H1 (cell line): ENCODE measurements at regions of chr11 and their contacts with region 1.

Region 1: GRCh38 chr11:65497141-65498041 is 1.5 kb upstream of the MALAT1 start:
- DNase-seq: peak; percentile 97
- H3K4me3 ChIP-seq: peak overlapping the region; percentile 82 to 100 (median 95)
- H3K27ac ChIP-seq: peak overlapping the region; percentile 99
- H3K4me1 ChIP-seq: peaks cover 7 to 21% (median 12%) of the 10 kb centered on the region in 4 experiments; a peak in 6 of 7 replicates
- H3K27me3 ChIP-seq: no peaks in the 10 kb centered on the region
- CTCF ChIP-seq: no peak
- EP300 ChIP-seq: peak; percentile 47 to 98; a peak in 2 of 3 replicates
- POLR2A ChIP-seq: peak; percentile 75 to 91
- RAD21 ChIP-seq: peak; percentile 5 to 31; a peak in 3 of 4 replicates

Region 2: DNA sequence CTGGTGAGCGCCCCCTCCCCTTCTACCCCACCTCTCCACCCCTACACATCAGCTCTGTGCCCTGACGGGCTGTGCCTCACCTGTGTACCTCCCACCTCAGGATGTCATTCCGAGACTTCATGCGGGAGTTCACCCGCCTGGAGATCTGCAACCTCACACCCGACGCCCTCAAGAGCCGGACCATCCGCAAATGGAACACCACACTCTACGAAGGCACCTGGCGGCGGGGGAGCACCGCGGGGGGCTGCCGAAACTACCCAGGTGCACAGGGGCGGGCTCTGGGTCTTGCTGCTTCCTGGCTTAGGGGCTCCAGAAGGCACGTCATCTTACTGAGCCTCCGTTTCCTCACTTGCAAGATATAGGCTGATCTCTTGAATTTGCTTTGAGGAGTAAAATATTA is 308.9 kb before region 1 on chr11:
- CTCF ChIA-PET with region 1: no interaction called
- POLR2A ChIA-PET with region 1: no interaction called
- DNase-seq: no peak
- H3K4me3 ChIP-seq: no peak overlapping the region
- H3K27ac ChIP-seq: no peak overlapping the region
- H3K4me1 ChIP-seq: peaks cover 7 to 29% (median 19%) of the 10 kb centered on the region in 4 experiments
- H3K27me3 ChIP-seq: no peaks in the 10 kb centered on the region
- CTCF ChIP-seq: no peak
- EP300 ChIP-seq: no peak
- POLR2A ChIP-seq: no peak
- RAD21 ChIP-seq: no peak

Region 3: GRCh38 chr11:65329944-65330403 is 167.4 kb before region 1 on chr11:
- CTCF ChIA-PET with region 1: no interaction called
- POLR2A ChIA-PET with region 1: interaction called, 15 read pairs
- DNase-seq: peak in 1 of 2 experiments; percentile 91
- H3K4me3 ChIP-seq: no peak overlapping the region
- H3K27ac ChIP-seq: no peak overlapping the region
- H3K4me1 ChIP-seq: peaks cover 0 to 4% (median 2%) of the 10 kb centered on the region in 4 experiments; a peak in 3 of 7 replicates
- H3K27me3 ChIP-seq: no peaks in the 10 kb centered on the region; a peak in 1 of 7 replicates
- CTCF ChIP-seq: peak; percentile 29 to 79 (median 77)
- EP300 ChIP-seq: no peak
- POLR2A ChIP-seq: no peak
- RAD21 ChIP-seq: peak; percentile 49 to 60

Region 4: DNA sequence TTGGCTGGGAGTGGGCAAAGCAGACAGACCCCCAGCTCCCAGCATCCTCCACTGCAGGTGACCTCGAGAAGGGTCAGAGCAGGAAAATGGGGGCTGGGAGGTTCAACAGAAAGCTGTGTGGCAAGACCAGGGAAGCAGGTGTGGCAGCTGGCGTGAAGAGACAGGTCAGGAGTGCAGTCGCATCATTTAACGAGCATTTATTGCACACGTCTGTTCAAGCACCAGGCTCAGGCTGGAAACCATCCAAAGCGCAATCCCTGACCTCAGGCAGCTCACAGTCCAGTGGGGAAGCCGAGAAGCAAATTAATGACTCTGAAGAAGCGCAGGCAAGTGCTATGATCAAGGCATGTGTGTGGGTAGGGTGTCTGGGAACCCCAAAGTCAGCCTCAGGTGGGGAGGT is 122.4 kb before region 1 on chr11:
- CTCF ChIA-PET with region 1: interaction called, 3 read pairs
- POLR2A ChIA-PET with region 1: interaction called, 16 read pairs
- DNase-seq: no peak
- H3K4me3 ChIP-seq: no peak overlapping the region
- H3K27ac ChIP-seq: no peak overlapping the region
- H3K4me1 ChIP-seq: no peaks in the 10 kb centered on the region
- H3K27me3 ChIP-seq: no peaks in the 10 kb centered on the region
- CTCF ChIP-seq: no peak
- EP300 ChIP-seq: no peak
- POLR2A ChIP-seq: no peak
- RAD21 ChIP-seq: no peak

Region 5: GRCh38 chr11:65418711-65419459 is 78.5 kb before region 1 on chr11:
- CTCF ChIA-PET with region 1: interaction called, 75 read pairs
- POLR2A ChIA-PET with region 1: interaction called, 826 read pairs
- DNase-seq: peak; percentile 75 to 86
- H3K4me3 ChIP-seq: peak overlapping the region in 2 of 4 experiments; percentile 5 to 37; a peak in 2 of 8 replicates
- H3K27ac ChIP-seq: peak overlapping the region; percentile 87
- H3K4me1 ChIP-seq: peaks cover 21 to 66% (median 46%) of the 10 kb centered on the region in 4 experiments
- H3K27me3 ChIP-seq: no peaks in the 10 kb centered on the region; a peak in 1 of 7 replicates
- CTCF ChIP-seq: no peak
- EP300 ChIP-seq: peak; percentile 13 to 75; a peak in 2 of 3 replicates
- POLR2A ChIP-seq: no peak; a peak in 2 of 3 replicates
- RAD21 ChIP-seq: no peak; a peak in 1 of 4 replicates

Region 6: GRCh38 chr11:65454696-65455456 is 42.5 kb before region 1 on chr11:
- CTCF ChIA-PET with region 1: interaction called, 809 read pairs
- POLR2A ChIA-PET with region 1: interaction called, 1,447 read pairs
- DNase-seq: peak; percentile 69 to 92
- H3K4me3 ChIP-seq: peak overlapping the region; percentile 46 to 67 (median 54); a peak in 7 of 8 replicates
- H3K27ac ChIP-seq: no peak overlapping the region
- H3K4me1 ChIP-seq: peaks cover 2 to 11% (median 6%) of the 10 kb centered on the region in 4 experiments; a peak in 6 of 7 replicates
- H3K27me3 ChIP-seq: peaks cover 20 to 59% (median 53%) of the 10 kb centered on the region in 4 experiments
- CTCF ChIP-seq: no peak
- EP300 ChIP-seq: no peak
- POLR2A ChIP-seq: peak in 1 of 2 experiments; percentile 29; a peak in 1 of 3 replicates
- RAD21 ChIP-seq: no peak

Region 7: DNA sequence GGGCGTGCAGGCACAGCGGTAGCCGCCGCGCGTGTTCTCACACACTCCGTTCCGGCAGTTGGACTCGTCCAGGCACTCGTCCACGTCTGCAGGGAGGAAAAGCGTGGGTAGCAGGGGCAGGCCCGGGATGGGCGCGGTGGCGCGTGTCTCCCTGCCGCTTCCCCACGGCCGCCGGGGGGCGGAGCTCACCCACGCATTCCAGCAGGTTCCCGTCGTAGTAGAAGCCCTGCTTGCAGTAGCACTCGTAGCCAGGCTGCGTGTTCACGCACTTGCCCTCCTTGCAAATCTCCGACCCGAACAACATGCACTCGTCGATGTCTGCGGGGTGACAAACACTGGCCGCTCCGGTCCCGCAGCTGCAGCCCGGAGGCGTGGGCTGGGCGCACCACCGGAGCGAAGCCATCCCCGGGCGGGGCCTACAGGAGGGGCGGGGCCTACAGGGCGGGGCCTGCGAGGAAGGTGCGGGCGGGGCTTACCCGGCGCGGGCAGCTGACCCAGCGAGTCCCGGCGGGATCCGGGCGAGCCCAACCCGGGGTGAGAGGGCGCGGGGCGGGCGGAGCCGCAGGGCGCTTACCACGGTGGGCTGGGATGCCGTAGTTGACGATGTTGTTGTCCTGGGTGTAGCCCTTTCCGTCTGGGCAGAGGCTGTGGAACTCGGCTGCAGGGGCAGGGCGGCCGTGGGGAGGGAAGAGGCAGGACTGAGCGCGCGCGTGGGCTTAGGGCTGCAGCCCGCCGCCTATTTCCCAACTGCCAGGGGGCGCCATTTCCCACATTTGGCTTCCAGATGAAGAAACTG is 43.1 kb after region 1 on chr11:
- CTCF ChIA-PET with region 1: no interaction called
- POLR2A ChIA-PET with region 1: interaction called, 13 read pairs
- DNase-seq: peak in 1 of 2 experiments; percentile 98
- H3K4me3 ChIP-seq: peak overlapping the region; percentile 32 to 68 (median 46)
- H3K27ac ChIP-seq: no peak overlapping the region
- H3K4me1 ChIP-seq: peaks cover 0 to 9% (median 1%) of the 10 kb centered on the region in 4 experiments; a peak in 5 of 7 replicates
- H3K27me3 ChIP-seq: peaks cover 0 to 38% (median 21%) of the 10 kb centered on the region in 4 experiments; a peak in 6 of 7 replicates
- CTCF ChIP-seq: peak in 2 of 3 experiments; percentile 75 to 88; a peak in 3 of 4 replicates
- EP300 ChIP-seq: no peak
- POLR2A ChIP-seq: no peak; a peak in 1 of 3 replicates
- RAD21 ChIP-seq: peak; percentile 74 to 81